Dendritic cell treated with granulocyte-macrophage colony-stimulating factor and Interleukin-4, amounts not matched to agents 40 ng/mL and 50 ng/mL, for 4 days (primary cell): ENCODE measurements at regions of chr5 and their contacts with region 1.

Region 1: DNA sequence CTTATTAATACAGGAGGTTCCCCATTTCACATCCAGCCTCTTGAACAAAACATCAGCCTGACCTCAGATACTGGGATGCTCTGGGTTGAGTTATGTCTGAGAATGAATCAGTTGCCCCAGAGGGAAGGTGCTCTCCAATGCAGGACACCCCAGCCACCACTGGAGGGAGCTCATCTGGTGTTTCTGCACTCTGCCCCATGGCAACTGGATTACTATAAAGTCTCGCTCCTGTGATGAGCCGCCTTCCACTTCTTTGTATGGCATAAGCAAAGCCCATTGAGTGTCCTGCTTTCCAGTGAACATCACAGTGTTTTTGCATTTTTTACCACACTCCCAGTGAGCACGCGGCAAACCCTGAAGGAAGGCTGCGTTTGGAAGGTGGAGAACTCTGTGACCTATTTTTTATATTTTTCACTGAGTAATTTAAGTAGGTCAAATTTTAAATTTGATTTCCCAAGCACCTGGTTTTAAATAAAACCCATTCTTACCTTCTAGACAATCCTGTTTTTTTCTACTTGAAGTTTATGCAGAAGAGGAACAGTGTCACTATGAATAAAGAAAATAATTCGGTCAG is 176.9 kb upstream of the WWC1 start:
- H3K4me3 Mint-ChIP-seq: no peak overlapping the region
- H3K27ac Mint-ChIP-seq: no peak overlapping the region
- H3K4me1 Mint-ChIP-seq: peaks cover 23% of the 10 kb centered on the region
- H3K27me3 Mint-ChIP-seq: no peaks in the 10 kb centered on the region

Region 2: DNA sequence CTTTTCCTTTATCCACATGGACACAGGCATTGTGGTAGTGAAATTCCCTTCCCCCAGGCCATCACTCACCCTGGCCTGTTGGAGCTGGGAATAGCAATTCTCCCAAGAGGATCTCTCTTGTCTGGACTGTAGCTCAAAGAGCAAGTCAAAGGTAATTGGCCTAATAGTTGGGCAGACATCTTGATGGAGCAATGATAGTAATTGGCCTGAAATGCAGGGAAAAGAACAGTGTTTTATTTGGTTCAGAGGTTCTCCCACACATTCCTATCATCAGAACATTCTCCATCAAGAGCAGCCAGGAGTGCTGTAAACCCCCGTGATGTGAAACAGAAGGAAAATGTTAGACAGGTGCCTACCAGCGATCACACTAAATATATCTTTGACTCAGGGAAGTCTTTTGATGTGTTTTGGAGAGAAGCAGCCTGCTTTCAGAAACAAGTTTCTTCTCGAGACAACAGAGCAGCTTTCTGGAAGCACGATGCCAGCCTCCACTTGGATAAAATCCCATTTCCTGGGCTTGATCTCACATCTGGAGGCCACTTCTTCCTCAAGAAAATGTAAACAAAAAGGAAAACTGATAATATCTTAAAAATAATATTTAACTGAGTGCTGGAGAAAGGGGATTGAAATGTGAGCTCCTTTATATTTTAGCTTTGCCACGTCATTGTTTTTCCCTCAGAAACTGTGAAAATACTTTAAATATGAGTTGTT is 21.2 kb before region 1 on chr5:
- intact Hi-C with region 1: no loop called
- H3K4me3 Mint-ChIP-seq: no peak overlapping the region
- H3K27ac Mint-ChIP-seq: no peak overlapping the region
- H3K4me1 Mint-ChIP-seq: peaks cover 10% of the 10 kb centered on the region
- H3K27me3 Mint-ChIP-seq: no peaks in the 10 kb centered on the region

Region 3: GRCh38 chr5:168219515-168220410 is 105.2 kb after region 1 on chr5:
- intact Hi-C with region 1: loop called (anchors 1 kb)
- H3K4me3 Mint-ChIP-seq: no peak overlapping the region
- H3K27ac Mint-ChIP-seq: no peak overlapping the region
- H3K4me1 Mint-ChIP-seq: peaks cover 5% of the 10 kb centered on the region
- H3K27me3 Mint-ChIP-seq: peaks cover 6% of the 10 kb centered on the region